Cardiac septum (tissue), 1 donor: ENCODE measurements at regions of chr7 and their contacts with region 1.

Region 1: GRCh38 chr7:322111-322671 is 32.2 kb downstream of the FOXL3 start:
- DNase-seq: peak; percentile 87

Region 2: DNA sequence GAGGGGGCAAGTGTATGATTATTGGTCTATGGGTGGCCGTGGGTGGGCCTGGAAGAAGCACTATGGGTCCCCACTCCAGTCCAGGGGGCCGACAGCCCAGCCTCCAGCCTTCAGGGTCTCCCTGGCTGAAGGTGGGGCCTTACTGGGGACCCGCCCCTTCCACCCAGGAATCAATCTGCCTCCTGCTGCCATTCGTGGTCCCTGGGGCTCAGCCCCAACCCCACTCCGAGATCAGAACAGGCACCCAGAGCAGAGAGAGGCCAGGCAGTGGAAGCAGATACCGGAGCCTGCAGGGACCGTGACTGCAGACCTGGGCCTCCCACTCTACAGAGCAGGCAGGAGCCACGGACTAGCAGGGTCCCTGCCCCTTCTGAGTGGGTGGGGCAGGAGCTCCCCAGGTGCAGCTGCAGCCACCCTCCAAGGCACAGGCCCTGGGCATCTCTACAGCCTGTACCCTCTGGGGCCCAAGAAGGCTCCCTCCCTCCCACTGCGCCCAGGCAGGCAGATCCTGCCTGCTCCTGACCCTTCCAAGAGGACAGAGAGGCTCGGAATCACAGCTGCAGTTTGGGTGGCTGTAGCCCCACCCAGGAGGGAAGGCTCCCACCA is 45.9 kb before region 1 on chr7:
- intact Hi-C with region 1: no loop called
- DNase-seq: no peak

Region 3: GRCh38 chr7:711093-711921 is 389.1 kb after region 1 on chr7:
- intact Hi-C with region 1: no loop called
- DNase-seq: no peak

Region 4: GRCh38 chr7:774161-775109 is 452.2 kb after region 1 on chr7:
- intact Hi-C with region 1: loop called (anchors 2 kb)
- DNase-seq: no peak